ENCODE measurements at regions of chr7 and their contacts with region 1.

Region 1: GRCh38 chr7:105487579-105488571 is 34.2 kb downstream of the PUS7 start:
- DNase-seq: no peak
- ATAC-seq: peak; percentile 48 to 82 (median 78)
- H3K4me3 ChIP-seq: no peak overlapping the region
- H3K27ac ChIP-seq: no peak overlapping the region
- H3K4me1 ChIP-seq: peaks cover 0 to 5% (median 0%) of the 10 kb centered on the region in 3 donors
- H3K27me3 ChIP-seq: no peaks in the 10 kb centered on the region
- CTCF ChIP-seq: no peak

Region 2: GRCh38 chr7:105402221-105403095 is 85.4 kb before region 1 on chr7:
- intact Hi-C with region 1: loop called in 2 of 3 experiments (anchors 10 kb)
- DNase-seq: no peak
- ATAC-seq: no peak
- H3K4me3 ChIP-seq: no peak overlapping the region
- H3K27ac ChIP-seq: no peak overlapping the region
- H3K4me1 ChIP-seq: no peaks in the 10 kb centered on the region
- H3K27me3 ChIP-seq: no peaks in the 10 kb centered on the region
- CTCF ChIP-seq: no peak

Measured in pancreas (tissue), 10 donors.